H1 (cell line): ENCODE measurements at regions of chr2 and their contacts with region 1.

Region 1: GRCh38 chr2:9401646-9402371 is 21.5 kb downstream of the ITGB1BP1 start:
- DNase-seq: no peak
- H3K4me3 ChIP-seq: no peak overlapping the region
- H3K27ac ChIP-seq: no peak overlapping the region
- H3K4me1 ChIP-seq: no peaks in the 10 kb centered on the region; a peak in 2 of 7 replicates
- H3K27me3 ChIP-seq: no peaks in the 10 kb centered on the region
- CTCF ChIP-seq: peak in 2 of 3 experiments; percentile 2 to 24; a peak in 2 of 4 replicates
- EP300 ChIP-seq: no peak
- POLR2A ChIP-seq: no peak
- RAD21 ChIP-seq: 0 out of 4 replicates have a peak, but pooled peaks of 1 of the 2 experiments have one; percentile 6

Region 2: GRCh38 chr2:9385841-9386240 is 16.0 kb before region 1 on chr2:
- CTCF ChIA-PET with region 1: interaction called, 13 read pairs
- POLR2A ChIA-PET with region 1: interaction called, 4 read pairs
- DNase-seq: no peak
- H3K4me3 ChIP-seq: no peak overlapping the region
- H3K27ac ChIP-seq: no peak overlapping the region
- H3K4me1 ChIP-seq: peaks cover 0 to 2% (median 0%) of the 10 kb centered on the region in 4 experiments; a peak in 1 of 7 replicates
- H3K27me3 ChIP-seq: no peaks in the 10 kb centered on the region
- CTCF ChIP-seq: no peak
- EP300 ChIP-seq: no peak
- POLR2A ChIP-seq: no peak
- RAD21 ChIP-seq: no peak

Region 3: DNA sequence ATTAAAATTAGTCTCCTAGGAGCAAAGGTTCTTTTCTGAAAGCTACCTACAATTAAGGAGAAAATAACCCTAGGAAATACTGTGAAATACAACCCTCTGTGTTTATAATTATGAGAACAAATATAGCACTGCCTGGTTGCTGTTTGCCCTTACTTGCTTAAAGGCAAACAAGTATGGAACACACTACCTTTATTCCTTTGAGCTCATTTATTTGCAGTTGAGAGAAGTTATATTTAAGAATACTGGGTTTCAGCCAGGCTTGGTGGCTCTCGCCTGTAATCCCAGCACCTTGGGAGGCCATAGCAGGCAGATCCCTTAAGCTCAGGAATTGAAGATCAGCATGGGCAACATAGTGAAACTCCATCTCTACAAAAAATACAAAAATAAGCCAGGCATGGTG is 49.4 kb after region 1 on chr2:
- CTCF ChIA-PET with region 1: no interaction called
- POLR2A ChIA-PET with region 1: no interaction called
- DNase-seq: no peak
- H3K4me3 ChIP-seq: no peak overlapping the region
- H3K27ac ChIP-seq: no peak overlapping the region
- H3K4me1 ChIP-seq: no peaks in the 10 kb centered on the region
- H3K27me3 ChIP-seq: no peaks in the 10 kb centered on the region
- CTCF ChIP-seq: no peak
- EP300 ChIP-seq: no peak
- POLR2A ChIP-seq: no peak
- RAD21 ChIP-seq: no peak